Panc1 (cell line): ENCODE measurements at regions of chr17 and their contacts with region 1.

Region 1: DNA sequence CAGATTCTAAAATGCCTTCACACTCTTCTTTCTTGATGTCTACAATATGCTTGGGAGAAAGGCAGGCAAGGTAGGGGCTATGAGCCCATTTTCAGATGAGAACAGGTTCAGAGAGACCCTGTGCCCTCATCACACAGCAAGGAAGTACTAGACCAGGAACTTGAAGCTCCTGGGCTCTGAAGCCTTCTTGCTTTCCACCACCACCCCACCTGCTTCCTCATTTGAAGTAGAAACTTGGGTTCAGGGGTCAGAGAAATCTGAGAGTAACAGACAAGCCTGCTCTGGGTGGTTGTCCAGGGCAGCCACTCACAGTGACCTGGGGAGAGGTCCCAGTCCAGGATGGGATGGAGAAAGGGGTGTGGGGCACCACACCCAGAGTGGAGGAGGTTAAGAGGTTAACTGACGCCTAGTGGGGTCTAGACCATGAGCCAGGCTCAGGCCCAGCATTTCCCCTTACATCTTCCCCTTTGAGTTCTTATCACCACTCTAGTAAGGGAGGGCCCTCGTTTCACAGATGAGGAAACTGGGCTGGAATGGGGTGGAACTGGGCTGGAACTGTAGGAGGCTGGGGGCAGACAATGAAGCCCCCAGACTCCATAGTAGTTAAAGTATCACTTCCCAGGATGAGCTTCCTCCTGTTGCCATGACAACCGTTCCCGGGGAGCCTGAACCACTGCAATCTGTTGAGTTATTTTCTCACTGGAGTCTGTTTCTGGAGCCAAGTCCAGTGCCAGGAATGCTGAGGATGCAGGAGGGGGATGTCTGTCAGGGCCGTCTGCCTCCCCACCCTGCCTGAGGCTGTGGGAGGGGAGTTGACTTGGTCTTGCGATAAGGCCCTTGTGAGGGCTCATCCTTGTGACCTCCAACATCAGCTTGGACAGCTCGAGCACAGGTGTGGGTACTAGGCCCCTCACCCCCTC is 16.2 kb upstream of the PHF12 start:
- DNase-seq: no peak
- ATAC-seq: no peak
- H3K4me3 ChIP-seq: no peak overlapping the region
- H3K27ac ChIP-seq: no peak overlapping the region
- H3K4me1 ChIP-seq: no peaks in the 10 kb centered on the region; the same call in 1 of the 2 replicates
- H3K27me3 ChIP-seq: peaks cover 3% of the 10 kb centered on the region; the same call in 1 of the 2 replicates
- CTCF ChIP-seq: no peak

Region 2: GRCh38 chr17:28871056-28871579 is 96.4 kb before region 1 on chr17:
- CTCF ChIA-PET with region 1: no interaction called
- POLR2A ChIA-PET with region 1: no interaction called
- in situ Hi-C with region 1: no loop called
- intact Hi-C with region 1: no loop called
- DNase-seq: no peak
- ATAC-seq: no peak
- H3K4me3 ChIP-seq: no peak overlapping the region
- H3K27ac ChIP-seq: no peak overlapping the region
- H3K4me1 ChIP-seq: no peaks in the 10 kb centered on the region
- H3K27me3 ChIP-seq: no peaks in the 10 kb centered on the region
- CTCF ChIP-seq: no peak

Region 3: GRCh38 chr17:28951991-28952975 is 15.2 kb before region 1 on chr17:
- CTCF ChIA-PET with region 1: interaction called, 11 read pairs
- POLR2A ChIA-PET with region 1: no interaction called
- in situ Hi-C with region 1: no loop called
- intact Hi-C with region 1: no loop called
- DNase-seq: peak; percentile 98
- ATAC-seq: peak; percentile 84
- H3K4me3 ChIP-seq: peak overlapping the region; percentile 80 to 90
- H3K27ac ChIP-seq: peak overlapping the region; percentile 100
- H3K4me1 ChIP-seq: peaks cover 20% of the 10 kb centered on the region
- H3K27me3 ChIP-seq: no peaks in the 10 kb centered on the region
- CTCF ChIP-seq: no peak

Region 4: GRCh38 chr17:29069526-29070041 is 102.1 kb after region 1 on chr17:
- CTCF ChIA-PET with region 1: interaction called, 4 read pairs
- POLR2A ChIA-PET with region 1: interaction called, 13 read pairs
- in situ Hi-C with region 1: no loop called
- intact Hi-C with region 1: no loop called
- DNase-seq: no peak
- ATAC-seq: no peak
- H3K4me3 ChIP-seq: no peak overlapping the region
- H3K27ac ChIP-seq: no peak overlapping the region
- H3K4me1 ChIP-seq: no peaks in the 10 kb centered on the region
- H3K27me3 ChIP-seq: no peaks in the 10 kb centered on the region
- CTCF ChIP-seq: no peak

Region 5: DNA sequence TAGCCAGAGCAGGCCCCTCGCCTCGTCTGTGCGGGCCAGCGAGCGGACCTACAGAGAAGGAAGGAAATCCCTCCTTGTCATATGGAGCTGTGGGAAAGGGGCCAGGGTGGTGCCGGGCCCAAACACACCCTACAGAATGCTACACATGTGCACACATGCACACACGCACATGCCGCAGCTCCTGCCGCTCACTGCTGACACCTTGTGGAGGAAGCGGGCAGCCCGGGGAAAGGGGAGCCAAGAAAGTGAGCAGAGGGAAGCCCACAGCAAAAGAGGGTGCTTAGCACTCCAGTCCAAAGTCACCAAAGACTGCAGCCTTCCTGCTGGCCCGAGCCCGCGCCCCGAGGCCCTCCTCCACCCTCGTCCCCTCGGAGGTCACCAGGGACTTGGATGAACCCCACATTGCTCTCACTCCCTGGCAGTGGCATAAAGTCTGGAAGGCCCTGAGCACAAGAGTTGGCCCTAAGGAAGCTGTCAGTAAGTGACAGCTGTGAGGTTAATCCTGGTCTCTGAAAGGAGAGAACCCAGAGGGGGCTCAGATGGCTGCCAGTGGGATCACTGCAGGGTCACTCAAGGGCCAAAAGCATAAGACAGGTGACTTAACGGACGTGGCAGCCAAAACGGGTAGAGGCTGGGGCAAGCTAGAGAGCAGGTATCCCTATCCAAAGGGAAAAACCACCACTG is 144.5 kb after region 1 on chr17:
- CTCF ChIA-PET with region 1: interaction called, 80 read pairs
- POLR2A ChIA-PET with region 1: interaction called, 3 read pairs
- in situ Hi-C with region 1: no loop called
- intact Hi-C with region 1: loop called (anchors 2 kb)
- DNase-seq: no peak
- ATAC-seq: peak; percentile 75
- H3K4me3 ChIP-seq: no peak overlapping the region
- H3K27ac ChIP-seq: no peak overlapping the region
- H3K4me1 ChIP-seq: peaks cover 12% of the 10 kb centered on the region
- H3K27me3 ChIP-seq: no peaks in the 10 kb centered on the region
- CTCF ChIP-seq: peak; percentile 96

Region 6: DNA sequence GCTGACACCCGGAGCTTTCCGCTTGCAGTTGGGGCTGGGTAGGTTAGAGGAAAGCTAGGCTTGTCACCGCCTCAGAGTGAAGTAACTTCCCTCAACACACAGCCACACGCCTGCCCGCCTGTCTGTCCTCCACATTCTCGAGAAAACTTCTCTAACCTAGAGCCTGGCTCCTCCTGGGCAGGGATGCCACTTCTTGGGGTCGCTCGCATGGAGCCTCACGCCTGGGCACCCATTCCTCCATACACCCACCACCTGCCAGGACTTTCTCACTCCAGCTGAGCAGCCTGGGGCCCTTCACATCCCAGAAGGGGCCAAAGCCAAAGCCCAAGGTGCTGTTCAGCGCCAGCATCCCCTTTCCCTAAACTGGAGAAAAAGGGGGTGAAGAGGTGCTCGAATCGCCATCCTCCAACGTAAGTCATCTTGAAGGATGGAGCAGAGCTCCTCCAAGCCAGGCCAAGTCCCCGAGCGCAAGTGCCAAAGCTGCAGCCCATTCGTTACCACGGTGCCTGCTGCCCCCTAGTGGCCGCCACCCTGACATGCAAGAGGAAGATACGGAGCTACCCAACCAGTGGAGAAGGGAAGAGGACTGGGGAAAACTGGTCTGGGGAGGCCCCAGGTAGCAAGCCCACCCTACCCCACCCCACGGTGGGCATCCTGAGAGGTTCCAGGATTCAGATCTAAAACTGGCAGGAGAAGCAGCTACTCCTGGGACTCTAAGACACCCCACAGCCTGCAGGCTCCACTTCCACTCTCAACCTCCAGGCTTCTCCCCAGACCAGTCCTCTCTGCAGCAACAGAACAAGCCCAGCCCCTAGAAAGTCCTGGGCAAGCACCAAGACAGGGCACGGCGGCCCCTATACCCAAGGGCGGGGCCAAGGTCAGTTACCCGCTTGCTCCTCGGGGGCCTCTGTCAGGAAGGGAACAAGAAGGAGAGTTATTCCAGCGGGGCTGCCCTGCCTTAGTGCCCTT is 149.6 kb after region 1 on chr17:
- CTCF ChIA-PET with region 1: interaction called, 80 read pairs
- POLR2A ChIA-PET with region 1: interaction called, 3 read pairs
- in situ Hi-C with region 1: no loop called
- intact Hi-C with region 1: no loop called
- DNase-seq: peak; percentile 35
- ATAC-seq: peak; percentile 76
- H3K4me3 ChIP-seq: no peak overlapping the region
- H3K27ac ChIP-seq: no peak overlapping the region
- H3K4me1 ChIP-seq: peaks cover 5% of the 10 kb centered on the region; the same call in 1 of the 2 replicates
- H3K27me3 ChIP-seq: no peaks in the 10 kb centered on the region
- CTCF ChIP-seq: peak; percentile 96

Region 7: DNA sequence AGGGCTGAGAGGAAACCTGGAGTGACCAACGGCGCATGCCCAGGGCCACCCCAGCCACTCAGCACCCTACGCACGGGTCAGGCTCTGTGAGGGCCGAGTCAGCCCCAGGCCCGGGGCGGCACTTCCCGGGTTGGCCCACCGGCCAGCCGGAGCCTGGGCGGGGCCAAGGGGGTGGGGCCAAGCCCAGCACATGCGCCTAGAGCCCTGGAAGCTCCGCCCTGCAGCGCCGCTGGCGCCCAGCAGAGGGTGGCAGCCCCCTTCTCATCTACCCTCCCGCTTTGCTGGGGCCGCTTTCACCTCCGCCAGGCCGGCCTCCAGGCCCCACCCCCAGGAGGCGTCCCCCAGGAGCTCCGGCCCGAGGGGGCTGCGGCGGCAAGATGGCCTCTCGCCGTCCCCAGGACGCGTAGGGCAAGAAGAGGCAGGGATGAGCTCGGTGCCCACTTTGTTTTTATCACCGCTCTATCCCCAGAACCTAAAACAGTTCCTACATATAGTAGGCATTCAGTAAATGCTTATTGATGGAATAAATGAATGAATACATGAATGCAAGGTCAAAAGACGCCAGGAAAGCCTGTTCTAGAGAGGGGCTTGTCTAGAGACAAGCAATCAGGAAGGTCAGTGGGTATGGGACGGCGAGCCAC is 181.4 kb after region 1 on chr17:
- CTCF ChIA-PET with region 1: interaction called, 13 read pairs
- POLR2A ChIA-PET with region 1: no interaction called
- in situ Hi-C with region 1: no loop called
- intact Hi-C with region 1: no loop called
- DNase-seq: peak; percentile 63
- ATAC-seq: peak; percentile 90
- H3K4me3 ChIP-seq: peak overlapping the region; percentile 39 to 53
- H3K27ac ChIP-seq: peak overlapping the region; percentile 97
- H3K4me1 ChIP-seq: peaks cover 82% of the 10 kb centered on the region
- H3K27me3 ChIP-seq: no peaks in the 10 kb centered on the region
- CTCF ChIP-seq: peak; percentile 97